ENCODE measurements at regions of chr1 and their contacts with region 1.

Region 1: GRCh38 chr1:44261171-44261817 is 48.0 kb downstream of the DMAP1 start:
- DNase-seq: no peak
- H3K4me3 ChIP-seq: no peak overlapping the region
- H3K27ac ChIP-seq: no peak overlapping the region
- H3K4me1 ChIP-seq: no peaks in the 10 kb centered on the region
- H3K27me3 ChIP-seq: no peaks in the 10 kb centered on the region
- CTCF ChIP-seq: no peak
- POLR2A ChIP-seq: no peak

Region 2: DNA sequence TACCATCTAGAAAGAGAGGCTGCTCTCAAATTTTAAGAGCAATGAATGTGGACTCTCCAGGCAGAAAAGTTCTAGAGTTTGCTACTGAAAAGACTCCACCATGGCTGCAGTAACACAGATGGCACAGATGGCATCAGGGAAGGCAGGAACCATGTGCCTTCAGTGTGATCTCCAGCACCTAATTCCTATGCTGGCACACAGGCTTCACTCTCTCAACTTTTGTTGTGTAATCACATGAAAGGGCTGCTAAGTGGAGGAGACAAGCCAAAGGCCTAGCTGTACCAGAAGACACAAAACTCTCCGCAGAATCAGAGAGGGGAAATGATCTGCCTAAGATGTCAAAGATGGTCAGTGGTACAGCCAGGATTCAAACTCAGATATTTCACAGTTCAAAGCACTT is 62.7 kb after region 1 on chr1:
- intact Hi-C with region 1: loop called (anchors 2 kb)
- DNase-seq: no peak
- H3K4me3 ChIP-seq: no peak overlapping the region
- H3K27ac ChIP-seq: no peak overlapping the region
- H3K4me1 ChIP-seq: peaks cover 0 to 16% of the 10 kb centered on the region in 2 donors
- H3K27me3 ChIP-seq: no peaks in the 10 kb centered on the region
- CTCF ChIP-seq: no peak
- POLR2A ChIP-seq: no peak